ENCODE measurements at regions of chr2 and their contacts with region 1.

Region 1: GRCh38 chr2:82879803-82880202 is 1579.3 kb downstream of the SUCLG1 start:
- DNase-seq: peak; percentile 43
- ATAC-seq: peak; percentile 84
- H3K4me3 ChIP-seq: no peak overlapping the region
- H3K27ac ChIP-seq: 0 out of 2 replicates have a peak overlapping the region, but pooled peaks have one; percentile 6
- H3K4me1 ChIP-seq: no peaks in the 10 kb centered on the region
- H3K27me3 ChIP-seq: no peaks in the 10 kb centered on the region
- CTCF ChIP-seq: no peak

Region 2: DNA sequence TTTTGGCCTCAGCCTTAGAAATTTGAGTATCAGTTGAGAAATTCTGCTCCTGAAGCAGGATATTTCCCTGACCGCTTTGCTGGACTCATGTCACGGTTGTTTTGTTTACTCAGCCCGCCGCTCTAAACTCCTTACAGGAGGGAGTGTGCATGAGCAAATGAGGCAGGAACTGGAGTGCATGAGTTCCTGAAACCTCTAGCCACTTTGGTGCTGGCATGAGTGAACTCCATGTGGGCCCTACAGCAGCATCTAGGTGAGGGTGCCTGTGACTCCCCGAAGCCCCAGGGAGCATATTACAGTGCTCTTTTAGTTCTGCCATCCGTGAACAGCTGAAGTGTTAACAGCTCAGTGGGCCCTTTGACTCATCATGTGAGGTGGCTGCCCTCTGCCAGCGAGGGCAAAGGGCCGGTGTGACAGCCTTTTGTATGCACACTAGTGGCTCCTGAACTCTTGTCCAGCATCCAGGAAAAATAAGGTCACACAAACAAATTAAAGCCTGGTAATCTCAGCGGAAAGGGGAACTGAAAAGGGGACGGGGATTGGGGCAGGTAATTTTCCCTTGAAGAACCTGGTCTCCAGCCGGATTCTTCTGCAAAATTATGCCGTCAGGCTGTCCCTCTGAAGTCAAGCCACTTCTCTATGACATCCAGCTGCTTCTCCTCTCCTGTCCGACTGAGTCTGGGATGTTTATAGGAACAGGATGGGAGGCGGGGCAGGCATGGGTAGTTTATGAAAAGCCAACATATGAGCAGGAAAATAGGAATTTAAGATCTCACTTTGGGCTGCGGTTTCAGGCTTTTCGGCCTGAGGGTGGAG is 89.4 kb before region 1 on chr2:
- CTCF ChIA-PET with region 1: no interaction called
- POLR2A ChIA-PET with region 1: no interaction called
- intact Hi-C with region 1: loop called (anchors 5 kb)
- DNase-seq: peak; percentile 77
- ATAC-seq: peak; percentile 65
- H3K4me3 ChIP-seq: peak overlapping the region; percentile 42; the same call in 1 of the 2 replicates
- H3K27ac ChIP-seq: peak overlapping the region; percentile 79
- H3K4me1 ChIP-seq: peaks cover 37% of the 10 kb centered on the region
- H3K27me3 ChIP-seq: no peaks in the 10 kb centered on the region
- CTCF ChIP-seq: no peak

Region 3: GRCh38 chr2:83155826-83156225 is 276.0 kb after region 1 on chr2:
- CTCF ChIA-PET with region 1: no interaction called
- POLR2A ChIA-PET with region 1: no interaction called
- intact Hi-C with region 1: no loop called
- DNase-seq: no peak
- ATAC-seq: no peak
- H3K4me3 ChIP-seq: no peak overlapping the region
- H3K27ac ChIP-seq: no peak overlapping the region
- H3K4me1 ChIP-seq: no peaks in the 10 kb centered on the region
- H3K27me3 ChIP-seq: no peaks in the 10 kb centered on the region
- CTCF ChIP-seq: no peak

Region 4: DNA sequence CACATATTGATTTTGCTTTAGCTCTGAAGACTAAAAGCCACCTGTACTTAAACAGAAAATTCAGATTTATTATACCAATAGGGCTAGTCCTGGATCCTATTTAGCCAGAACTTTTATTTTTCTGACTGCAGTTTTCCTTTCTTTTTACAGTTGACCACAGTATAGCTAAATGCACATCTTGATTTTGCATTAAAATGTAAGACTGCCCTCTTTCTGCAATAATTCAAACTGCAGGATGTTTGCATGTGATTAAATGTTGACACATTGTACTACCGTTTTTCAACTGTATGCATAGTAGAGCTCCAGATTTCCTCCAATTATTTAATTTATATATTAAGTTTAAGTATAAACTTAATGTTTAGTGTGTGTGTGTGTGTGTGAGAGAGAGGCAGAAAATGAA is 316.4 kb after region 1 on chr2:
- CTCF ChIA-PET with region 1: no interaction called
- POLR2A ChIA-PET with region 1: no interaction called
- intact Hi-C with region 1: loop called (anchors 10 kb)
- DNase-seq: peak; percentile 73
- ATAC-seq: peak; percentile 93
- H3K4me3 ChIP-seq: no peak overlapping the region
- H3K27ac ChIP-seq: no peak overlapping the region
- H3K4me1 ChIP-seq: no peaks in the 10 kb centered on the region
- H3K27me3 ChIP-seq: no peaks in the 10 kb centered on the region
- CTCF ChIP-seq: peak; percentile 78

Measured in PC-3 (cell line).